IMR-90 (cell line): ENCODE measurements at regions of chr6 and their contacts with region 1.

Region 1: GRCh38 chr6:8983188-8983688 is 547.9 kb upstream of the SLC35B3 start:
- DNase-seq: peak; percentile 53
- ATAC-seq: peak; percentile 100
- H3K4me3 ChIP-seq: no peak overlapping the region
- H3K27ac ChIP-seq: no peak overlapping the region
- H3K4me1 ChIP-seq: no peaks in the 10 kb centered on the region
- H3K27me3 ChIP-seq: no peaks in the 10 kb centered on the region
- CTCF ChIP-seq: peak; percentile 96
- POLR2A ChIP-seq: no peak
- RAD21 ChIP-seq: peak; percentile 94

Region 2: DNA sequence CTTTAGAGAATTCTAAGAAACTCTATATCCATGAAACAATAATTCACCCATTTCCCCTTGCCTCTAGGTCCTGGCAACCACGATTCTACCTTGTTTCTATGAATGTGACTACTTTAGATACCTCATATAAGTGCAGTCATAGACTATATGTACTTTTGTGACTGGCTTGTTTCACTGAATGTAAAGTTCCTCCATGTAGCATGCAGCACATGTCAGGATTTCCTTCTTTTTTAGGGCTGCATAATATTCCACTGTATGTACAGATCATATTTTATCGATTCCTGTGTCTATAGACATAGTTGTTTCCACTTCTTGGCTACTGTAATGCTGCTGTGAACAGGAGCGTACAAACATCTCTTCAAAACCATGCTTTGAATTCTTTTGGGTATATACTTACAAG is 892.6 kb before region 1 on chr6:
- CTCF ChIA-PET with region 1: no interaction called
- POLR2A ChIA-PET with region 1: no interaction called
- dilution Hi-C with region 1: no loop called
- in situ Hi-C with region 1: no loop called
- intact Hi-C with region 1: no loop called
- DNase-seq: no peak
- ATAC-seq: no peak
- H3K4me3 ChIP-seq: no peak overlapping the region
- H3K27ac ChIP-seq: no peak overlapping the region
- H3K4me1 ChIP-seq: peaks cover 2% of the 10 kb centered on the region; the same call in 1 of the 2 replicates
- H3K27me3 ChIP-seq: no peaks in the 10 kb centered on the region
- CTCF ChIP-seq: no peak
- POLR2A ChIP-seq: no peak
- RAD21 ChIP-seq: no peak

Region 3: GRCh38 chr6:9140172-9140571 is 156.9 kb after region 1 on chr6:
- CTCF ChIA-PET with region 1: no interaction called
- POLR2A ChIA-PET with region 1: no interaction called
- dilution Hi-C with region 1: no loop called
- in situ Hi-C with region 1: no loop called
- intact Hi-C with region 1: loop called (anchors 5 kb)
- DNase-seq: peak; percentile 12
- ATAC-seq: peak; percentile 5; the same call in 1 of the 2 replicates
- H3K4me3 ChIP-seq: no peak overlapping the region
- H3K27ac ChIP-seq: no peak overlapping the region
- H3K4me1 ChIP-seq: peaks cover 5% of the 10 kb centered on the region
- H3K27me3 ChIP-seq: no peaks in the 10 kb centered on the region
- CTCF ChIP-seq: no peak
- POLR2A ChIP-seq: no peak
- RAD21 ChIP-seq: no peak

Region 4: DNA sequence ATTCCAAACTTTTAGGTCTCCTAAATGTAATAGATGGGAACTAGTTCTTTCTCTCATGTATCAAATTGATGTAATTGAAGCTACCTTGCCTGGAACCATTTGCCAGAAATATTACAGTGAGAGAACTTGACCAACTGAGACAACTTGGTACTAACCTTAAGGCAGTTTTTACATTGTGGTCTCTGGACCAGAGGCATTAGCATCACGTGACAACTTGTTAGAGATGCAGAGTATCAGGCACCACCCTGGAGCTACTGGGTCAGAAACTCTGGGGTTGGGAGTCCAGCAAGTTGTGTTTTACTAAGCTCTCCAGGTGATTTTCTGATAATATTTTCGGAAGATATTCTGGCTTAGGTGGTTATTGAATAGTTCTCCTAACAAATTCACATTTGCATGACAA is 434.2 kb after region 1 on chr6:
- CTCF ChIA-PET with region 1: no interaction called
- POLR2A ChIA-PET with region 1: no interaction called
- dilution Hi-C with region 1: no loop called
- in situ Hi-C with region 1: no loop called
- intact Hi-C with region 1: loop called (anchors 5 kb)
- DNase-seq: no peak
- ATAC-seq: no peak
- H3K4me3 ChIP-seq: no peak overlapping the region
- H3K27ac ChIP-seq: no peak overlapping the region
- H3K4me1 ChIP-seq: no peaks in the 10 kb centered on the region
- H3K27me3 ChIP-seq: no peaks in the 10 kb centered on the region
- CTCF ChIP-seq: no peak
- POLR2A ChIP-seq: no peak
- RAD21 ChIP-seq: no peak

Region 5: GRCh38 chr6:9520417-9521151 is 537.3 kb after region 1 on chr6:
- CTCF ChIA-PET with region 1: no interaction called
- POLR2A ChIA-PET with region 1: no interaction called
- dilution Hi-C with region 1: no loop called
- in situ Hi-C with region 1: loop called (anchors 25 kb)
- intact Hi-C with region 1: loop called (anchors 5 kb)
- DNase-seq: peak; percentile 89
- ATAC-seq: peak; percentile 39
- H3K4me3 ChIP-seq: no peak overlapping the region
- H3K27ac ChIP-seq: peak overlapping the region; percentile 57
- H3K4me1 ChIP-seq: peaks cover 10% of the 10 kb centered on the region
- H3K27me3 ChIP-seq: no peaks in the 10 kb centered on the region
- CTCF ChIP-seq: no peak
- POLR2A ChIP-seq: no peak
- RAD21 ChIP-seq: no peak

Region 6: DNA sequence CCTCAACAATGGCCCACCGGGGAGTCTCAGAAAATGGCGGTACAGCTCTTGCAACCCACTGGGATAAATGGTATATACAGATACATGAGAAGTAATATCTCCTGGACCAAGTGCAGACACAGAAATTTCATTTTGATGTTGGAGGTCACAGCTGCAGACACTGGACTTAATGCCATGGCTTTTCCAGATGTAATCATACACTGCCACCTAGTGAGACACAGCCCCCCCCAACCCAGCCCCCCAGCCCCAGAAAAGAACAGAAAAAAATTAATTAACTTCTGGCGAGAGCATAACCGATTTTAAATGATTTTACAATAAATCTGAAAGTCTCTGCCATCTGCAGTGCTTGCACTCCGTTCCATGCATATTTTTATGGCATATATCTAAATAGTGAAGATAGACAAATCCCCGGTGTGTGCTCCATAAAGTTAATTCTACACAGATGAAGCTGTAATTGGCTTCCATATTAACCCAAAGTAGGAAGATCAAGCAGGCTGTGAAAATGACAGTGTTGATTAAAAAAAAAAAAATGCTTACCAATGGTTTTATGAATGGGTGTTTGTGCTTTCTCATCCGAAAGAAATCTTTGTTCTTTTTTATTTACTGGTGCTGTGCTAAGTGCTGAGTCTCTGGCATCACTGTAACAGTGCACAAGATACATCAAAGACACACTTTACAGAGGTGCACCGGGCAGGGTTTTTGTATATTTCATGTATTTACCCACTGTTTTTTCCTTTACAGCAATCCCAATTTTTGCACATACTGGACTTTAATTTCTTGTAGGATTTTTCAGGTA is 627.6 kb after region 1 on chr6:
- CTCF ChIA-PET with region 1: no interaction called
- POLR2A ChIA-PET with region 1: no interaction called
- dilution Hi-C with region 1: no loop called
- in situ Hi-C with region 1: no loop called
- intact Hi-C with region 1: loop called (anchors 1 kb)
- DNase-seq: no peak
- ATAC-seq: peak; percentile 24; the same call in 1 of the 2 replicates
- H3K4me3 ChIP-seq: no peak overlapping the region
- H3K27ac ChIP-seq: no peak overlapping the region
- H3K4me1 ChIP-seq: 0 out of 2 replicates have a peak, but pooled peaks cover 2% of the 10 kb centered on the region
- H3K27me3 ChIP-seq: no peaks in the 10 kb centered on the region
- CTCF ChIP-seq: no peak
- POLR2A ChIP-seq: no peak
- RAD21 ChIP-seq: peak; percentile 20; the same call in 1 of the 2 replicates

Region 7: GRCh38 chr6:10411971-10412745 is 1428.9 kb after region 1 on chr6:
- CTCF ChIA-PET with region 1: interaction called, 3 read pairs
- POLR2A ChIA-PET with region 1: no interaction called
- dilution Hi-C with region 1: no loop called
- in situ Hi-C with region 1: no loop called
- intact Hi-C with region 1: loop called (anchors 5 kb)
- DNase-seq: peak; percentile 75
- ATAC-seq: peak; percentile 50
- H3K4me3 ChIP-seq: peak overlapping the region; percentile 67
- H3K27ac ChIP-seq: peak overlapping the region; percentile 64
- H3K4me1 ChIP-seq: no peaks in the 10 kb centered on the region; the same call in 1 of the 2 replicates
- H3K27me3 ChIP-seq: peaks cover 74% of the 10 kb centered on the region
- CTCF ChIP-seq: no peak
- POLR2A ChIP-seq: no peak
- RAD21 ChIP-seq: no peak

Region 8: DNA sequence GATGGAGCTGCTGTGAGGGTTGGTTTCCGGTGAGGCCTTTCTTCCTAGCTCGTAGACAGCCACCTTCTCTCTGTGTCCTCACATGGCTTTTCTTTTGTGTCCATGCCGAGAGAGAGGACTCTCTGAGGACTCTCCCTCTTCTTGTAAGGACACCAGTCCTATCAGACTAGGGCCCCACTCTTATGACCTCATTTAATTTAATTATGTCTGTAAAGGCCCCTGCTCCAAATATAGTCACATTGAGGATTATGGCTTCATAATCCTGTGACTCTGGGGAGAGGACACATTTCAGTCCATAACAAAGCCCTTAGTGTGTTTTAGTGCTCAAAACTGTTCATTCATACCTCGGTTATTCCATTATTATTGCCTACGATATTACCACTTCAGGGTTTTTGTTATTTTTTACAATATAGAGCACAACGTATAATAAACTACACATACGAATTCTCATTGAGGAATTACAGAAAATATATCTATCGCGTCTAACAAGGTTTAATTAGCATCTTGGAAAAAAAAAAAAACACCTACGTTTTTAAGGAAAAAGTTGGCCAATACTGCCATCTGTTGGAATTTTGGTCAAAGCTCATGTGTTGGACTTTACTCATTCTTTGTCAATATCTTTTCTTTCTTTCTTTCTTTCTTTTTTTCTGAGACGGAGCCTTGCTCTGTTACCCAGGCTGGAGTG is 1451.6 kb after region 1 on chr6:
- CTCF ChIA-PET with region 1: interaction called, 3 read pairs
- POLR2A ChIA-PET with region 1: no interaction called
- dilution Hi-C with region 1: no loop called
- in situ Hi-C with region 1: loop called (anchors 5 kb)
- intact Hi-C with region 1: no loop called
- DNase-seq: peak; percentile 50
- ATAC-seq: peak; percentile 32; the same call in 1 of the 2 replicates
- H3K4me3 ChIP-seq: no peak overlapping the region
- H3K27ac ChIP-seq: no peak overlapping the region
- H3K4me1 ChIP-seq: no peaks in the 10 kb centered on the region
- H3K27me3 ChIP-seq: no peaks in the 10 kb centered on the region
- CTCF ChIP-seq: peak; percentile 72
- POLR2A ChIP-seq: no peak
- RAD21 ChIP-seq: peak; percentile 69